ENCODE measurements at regions of chr5 and their contacts with region 1.

Region 1: GRCh38 chr5:132500931-132501630 is 10.5 kb upstream of the IRF1 start:
- DNase-seq: peak; percentile 37 to 75
- H3K4me3 ChIP-seq: no peak overlapping the region
- H3K4me1 ChIP-seq: no peaks in the 10 kb centered on the region
- H3K27me3 ChIP-seq: no peaks in the 10 kb centered on the region

Region 2: GRCh38 chr5:132272311-132273210 is 228.5 kb before region 1 on chr5:
- in situ Hi-C with region 1: loop called (anchors 10 kb)
- DNase-seq: peak; percentile 73 to 90
- H3K4me3 ChIP-seq: no peak overlapping the region
- H3K4me1 ChIP-seq: no peaks in the 10 kb centered on the region
- H3K27me3 ChIP-seq: no peaks in the 10 kb centered on the region

Region 3: GRCh38 chr5:132386644-132387286 is 114.3 kb before region 1 on chr5:
- in situ Hi-C with region 1: loop called (anchors 10 kb)
- DNase-seq: peak; percentile 20 to 41
- H3K4me3 ChIP-seq: no peak overlapping the region
- H3K4me1 ChIP-seq: no peaks in the 10 kb centered on the region
- H3K27me3 ChIP-seq: no peaks in the 10 kb centered on the region

Region 4: GRCh38 chr5:132759114-132760048 is 258.3 kb after region 1 on chr5:
- in situ Hi-C with region 1: no loop called
- DNase-seq: no peak
- H3K4me3 ChIP-seq: no peak overlapping the region
- H3K4me1 ChIP-seq: no peaks in the 10 kb centered on the region
- H3K27me3 ChIP-seq: no peaks in the 10 kb centered on the region

Region 5: GRCh38 chr5:133025804-133026663 is 525.0 kb after region 1 on chr5 and contains the start of gene ZCCHC10:
- in situ Hi-C with region 1: no loop called
- DNase-seq: peak; percentile 92 to 98
- H3K4me3 ChIP-seq: peak within 1 kb of the TSS; percentile 95
- H3K4me1 ChIP-seq: peaks cover 5% of the 10 kb centered on the region; the same call in 1 of the 2 replicates
- H3K27me3 ChIP-seq: no peaks in the 10 kb centered on the region